Lower leg skin (tissue), 4 donors: ENCODE measurements at regions of chr17 and their contacts with region 1.

Region 1: DNA sequence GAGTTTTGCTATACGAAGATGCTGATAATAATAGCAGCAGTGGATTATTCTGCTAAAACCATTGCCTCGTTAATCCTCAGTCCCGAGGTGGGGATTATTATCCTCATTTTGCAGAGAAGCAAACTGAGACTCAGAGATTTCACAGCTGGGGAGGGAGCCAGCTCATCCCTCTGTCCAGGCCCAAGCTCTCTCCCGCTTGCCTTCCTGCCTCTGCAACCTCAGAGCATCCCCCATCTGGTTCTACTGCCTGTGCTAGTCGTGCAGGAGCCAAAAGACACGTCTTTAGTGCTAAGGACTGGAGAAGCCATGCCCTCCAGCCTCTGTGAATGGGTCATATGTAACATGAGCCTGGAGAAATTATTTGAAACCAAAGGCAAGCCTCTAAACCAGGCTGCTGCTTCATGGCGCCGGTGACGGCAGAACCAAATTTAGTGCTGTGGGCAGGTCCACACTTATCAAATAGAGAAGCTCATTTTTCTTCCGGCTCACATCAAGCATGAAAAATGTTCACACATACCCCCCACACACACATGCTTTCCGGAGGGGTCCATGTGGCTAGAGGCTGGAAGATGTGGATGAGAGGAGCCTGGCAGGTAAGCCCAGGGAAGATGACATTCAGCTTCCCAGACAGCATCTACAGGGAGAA is 13.5 kb downstream of the MAPT start:
- DNase-seq: no peak
- H3K4me3 ChIP-seq: no peak overlapping the region
- CTCF ChIP-seq: no peak
- POLR2A ChIP-seq: no peak

Region 2: GRCh38 chr17:45942284-45942683 is 34.4 kb after region 1 on chr17:
- intact Hi-C with region 1: loop called (anchors 5 kb)
- DNase-seq: peak; percentile 62 to 94
- H3K4me3 ChIP-seq: no peak overlapping the region
- CTCF ChIP-seq: no peak
- POLR2A ChIP-seq: no peak